ENCODE measurements at regions of chr3 and their contacts with region 1.

Region 1: DNA sequence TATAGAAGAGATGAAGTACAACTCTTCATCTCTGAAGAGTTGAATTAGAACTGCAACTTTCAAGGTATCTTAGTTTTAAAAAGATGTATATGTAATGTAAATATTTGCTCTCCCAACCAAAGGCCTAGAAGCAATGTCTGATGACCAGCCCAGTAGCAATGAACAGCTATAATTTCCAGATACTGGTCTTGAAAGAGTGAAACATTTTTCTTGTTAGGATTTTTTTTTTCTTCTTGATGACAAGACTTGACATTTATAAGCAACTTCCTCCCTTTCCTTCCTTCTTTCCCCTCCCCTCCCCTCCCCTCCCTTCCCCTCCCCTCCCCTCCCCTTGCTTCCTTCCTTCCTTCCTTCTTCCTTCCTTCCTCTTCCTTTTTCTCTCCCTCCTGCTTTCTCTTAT is 423.4 kb downstream of the ZIC1 start:
- DNase-seq: no peak
- H3K4me3 Mint-ChIP-seq: no peak overlapping the region
- H3K27ac Mint-ChIP-seq: no peak overlapping the region
- H3K4me1 Mint-ChIP-seq: no peaks in the 10 kb centered on the region
- H3K27me3 Mint-ChIP-seq: no peaks in the 10 kb centered on the region
- CTCF ChIP-seq: no peak

Region 2: DNA sequence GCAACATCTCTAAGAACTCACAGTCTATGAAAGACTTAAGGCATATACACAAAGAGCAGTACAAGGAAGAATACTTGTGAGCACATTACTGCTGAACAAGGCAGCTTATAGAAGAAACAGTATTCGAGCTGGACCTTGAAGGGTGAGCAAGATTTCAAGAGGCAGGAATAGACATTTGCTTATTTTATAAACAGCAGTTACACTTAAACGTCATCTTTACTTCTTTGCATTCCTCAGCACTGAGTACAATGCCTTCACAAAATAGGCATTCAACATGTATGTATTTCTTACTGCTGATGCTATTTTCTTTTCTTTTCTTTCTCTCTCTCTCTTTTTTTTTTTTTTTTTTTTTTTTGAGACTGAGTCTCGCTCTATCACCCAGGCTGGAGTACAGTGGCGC is 632.1 kb before region 1 on chr3:
- CTCF ChIA-PET with region 1: interaction called, 10 read pairs
- intact Hi-C with region 1: no loop called
- DNase-seq: no peak
- H3K4me3 Mint-ChIP-seq: no peak overlapping the region
- H3K27ac Mint-ChIP-seq: no peak overlapping the region
- H3K4me1 Mint-ChIP-seq: no peaks in the 10 kb centered on the region
- H3K27me3 Mint-ChIP-seq: no peaks in the 10 kb centered on the region
- CTCF ChIP-seq: no peak

Region 3: DNA sequence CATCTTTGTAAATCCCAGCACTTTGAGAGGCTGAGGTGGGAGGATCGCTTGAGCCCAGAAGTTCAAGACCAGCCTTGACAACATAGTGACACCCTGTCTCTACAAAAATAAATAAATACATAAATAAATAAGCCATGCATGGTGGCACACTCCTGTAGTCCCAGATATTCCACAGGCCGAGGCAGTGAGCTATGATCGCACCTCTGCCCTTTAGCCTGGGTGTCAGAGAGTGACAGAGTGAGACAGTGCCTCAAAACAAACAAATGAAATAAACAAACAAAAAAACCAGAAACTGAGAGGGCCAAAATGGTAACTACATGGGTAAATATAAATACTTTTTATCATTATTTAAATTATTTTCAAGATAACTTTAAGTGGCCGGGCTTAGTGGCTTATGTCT is 21.9 kb after region 1 on chr3:
- CTCF ChIA-PET with region 1: no interaction called
- intact Hi-C with region 1: no loop called
- DNase-seq: no peak
- H3K4me3 Mint-ChIP-seq: no peak overlapping the region
- H3K27ac Mint-ChIP-seq: no peak overlapping the region
- H3K4me1 Mint-ChIP-seq: no peaks in the 10 kb centered on the region
- H3K27me3 Mint-ChIP-seq: no peaks in the 10 kb centered on the region
- CTCF ChIP-seq: no peak

Region 4: DNA sequence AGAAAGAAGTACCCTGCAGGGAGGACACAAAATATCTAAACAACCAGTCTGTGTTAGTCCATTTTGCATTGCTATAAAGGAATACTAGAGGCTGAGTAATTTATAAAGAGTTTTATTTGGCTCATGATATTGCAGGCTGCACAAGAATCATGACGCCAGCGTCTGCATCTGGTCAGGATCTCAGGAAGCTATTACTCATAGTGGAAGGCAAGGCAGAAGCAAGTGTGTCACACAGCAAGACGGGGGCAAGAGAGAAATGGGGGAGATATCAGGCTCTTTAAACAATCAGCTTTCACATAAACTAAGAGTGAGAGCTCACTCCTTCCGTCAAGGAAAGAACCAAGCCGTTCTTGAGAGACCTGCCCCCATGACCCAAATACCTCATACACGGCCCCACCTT is 191.4 kb after region 1 on chr3:
- CTCF ChIA-PET with region 1: no interaction called
- intact Hi-C with region 1: no loop called
- DNase-seq: no peak
- H3K4me3 Mint-ChIP-seq: no peak overlapping the region
- H3K27ac Mint-ChIP-seq: no peak overlapping the region
- H3K4me1 Mint-ChIP-seq: no peaks in the 10 kb centered on the region
- H3K27me3 Mint-ChIP-seq: no peaks in the 10 kb centered on the region
- CTCF ChIP-seq: no peak